CD4-positive, alpha-beta memory T cell (primary cell): ENCODE measurements at regions of chr4 and their contacts with region 1.

Region 1: GRCh38 chr4:93002240-93002639 is 698.5 kb downstream of the GRID2 start:
- DNase-seq: no peak
- H3K4me3 ChIP-seq: no peak overlapping the region
- H3K4me3 Mint-ChIP-seq: no peak overlapping the region
- H3K27ac ChIP-seq: no peak overlapping the region
- H3K27ac Mint-ChIP-seq: no peak overlapping the region
- H3K4me1 ChIP-seq: no peaks in the 10 kb centered on the region
- H3K4me1 Mint-ChIP-seq: no peaks in the 10 kb centered on the region
- H3K27me3 ChIP-seq: no peaks in the 10 kb centered on the region
- H3K27me3 Mint-ChIP-seq: no peaks in the 10 kb centered on the region

Region 2: GRCh38 chr4:92952426-92952825 is 49.8 kb before region 1 on chr4:
- CTCF ChIA-PET with region 1: no interaction called
- POLR2A ChIA-PET with region 1: no interaction called
- intact Hi-C with region 1: loop called (anchors 10 kb)
- DNase-seq: no peak
- H3K4me3 ChIP-seq: no peak overlapping the region
- H3K4me3 Mint-ChIP-seq: no peak overlapping the region
- H3K27ac ChIP-seq: no peak overlapping the region
- H3K27ac Mint-ChIP-seq: no peak overlapping the region
- H3K4me1 ChIP-seq: no peaks in the 10 kb centered on the region
- H3K4me1 Mint-ChIP-seq: no peaks in the 10 kb centered on the region
- H3K27me3 ChIP-seq: no peaks in the 10 kb centered on the region
- H3K27me3 Mint-ChIP-seq: no peaks in the 10 kb centered on the region